Aorta (tissue), 5 donors: ENCODE measurements at regions of chr10 and their contacts with region 1.

Region 1: GRCh38 chr10:94076321-94076841 is 82.7 kb downstream of the PLCE1 start:
- DNase-seq: no peak
- ATAC-seq: peak; percentile 78
- H3K4me3 ChIP-seq: no peak overlapping the region
- H3K27ac ChIP-seq: no peak overlapping the region
- H3K4me1 ChIP-seq: no peaks in the 10 kb centered on the region
- H3K27me3 ChIP-seq: no peaks in the 10 kb centered on the region

Region 2: DNA sequence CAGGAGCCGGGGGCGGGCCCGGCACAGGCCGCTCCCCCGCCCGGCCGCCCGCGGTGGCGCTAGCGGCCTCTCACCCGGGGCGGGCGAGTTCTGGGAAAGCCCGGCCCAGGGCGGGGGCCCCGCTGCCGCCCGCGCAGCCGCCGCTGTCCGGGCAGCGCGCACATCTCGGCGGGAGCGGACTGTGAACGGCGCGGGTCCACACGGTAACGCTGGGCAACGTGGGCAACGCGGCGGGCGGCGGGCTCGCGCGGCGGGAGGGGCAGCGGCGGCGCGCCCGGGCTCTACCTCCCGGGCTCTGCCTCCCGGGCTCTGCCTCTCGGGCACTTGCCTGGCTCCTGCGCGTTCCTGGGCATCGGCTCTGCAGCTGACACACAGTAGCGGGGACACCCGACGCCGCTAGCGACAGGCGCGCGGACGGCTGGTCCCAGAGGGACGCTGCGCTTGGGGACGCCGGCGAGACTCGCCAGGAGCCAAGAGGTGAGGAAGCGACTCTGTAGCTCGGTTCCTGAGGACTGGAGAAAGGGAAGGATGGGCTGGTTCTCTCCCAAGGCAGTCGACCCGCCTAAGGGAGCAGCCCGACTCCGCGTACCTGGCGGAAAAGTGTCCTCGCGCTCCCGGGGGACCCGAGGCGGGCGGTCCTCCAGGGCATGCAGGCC is 82.5 kb before region 1 on chr10 and contains the start of gene PLCE1:
- intact Hi-C with region 1: loop called in 1 of 2 experiments (anchors 5 kb)
- DNase-seq: peak; percentile 73 to 88
- ATAC-seq: peak; percentile 81
- H3K4me3 ChIP-seq: peak within 1 kb of the TSS; percentile 28 to 59
- H3K27ac ChIP-seq: peak within 1 kb of the TSS in 1 of 2 donors; percentile 12
- H3K4me1 ChIP-seq: no peaks in the 10 kb centered on the region
- H3K27me3 ChIP-seq: no peaks in the 10 kb centered on the region
- total RNA-seq, gene PLCE1: 14.7 to 16.6 TPM

Region 3: GRCh38 chr10:94315024-94315451 is 238.7 kb after region 1 on chr10:
- intact Hi-C with region 1: loop called (anchors 2 to 5 kb)
- DNase-seq: no peak
- ATAC-seq: no peak
- H3K4me3 ChIP-seq: no peak overlapping the region
- H3K27ac ChIP-seq: peak overlapping the region in 1 of 2 donors; percentile 83
- H3K4me1 ChIP-seq: peaks cover 0 to 5% of the 10 kb centered on the region in 2 donors
- H3K27me3 ChIP-seq: no peaks in the 10 kb centered on the region

Region 4: DNA sequence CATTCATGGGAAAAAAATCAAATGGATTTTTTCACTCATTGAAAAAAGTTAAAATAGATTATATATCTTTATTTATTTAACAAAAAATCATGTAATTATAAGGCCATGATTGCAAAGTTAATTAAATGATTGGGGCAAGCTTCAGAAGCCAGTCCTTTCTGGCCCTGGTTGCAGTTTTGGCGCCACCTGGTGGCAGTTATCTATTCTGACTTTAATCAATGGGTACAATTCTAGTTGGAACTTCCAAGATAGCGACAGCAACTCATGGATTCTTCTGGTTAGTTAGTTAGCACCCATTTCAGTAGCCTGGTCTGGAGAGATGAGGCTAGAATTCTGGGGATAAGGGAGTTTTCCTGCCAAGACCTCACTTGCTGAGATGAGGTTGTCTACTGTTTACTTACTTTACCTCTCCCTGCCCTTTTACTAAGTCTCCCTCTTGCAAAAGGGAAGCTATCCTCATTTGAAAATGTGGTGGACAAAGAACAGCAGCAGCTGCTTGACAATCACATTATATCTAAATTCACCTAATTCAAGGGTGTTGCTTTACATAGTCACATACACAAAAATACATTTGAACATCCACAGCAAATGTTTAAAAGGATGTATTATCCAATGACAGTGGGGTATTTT is 244.0 kb after region 1 on chr10:
- intact Hi-C with region 1: loop called (anchors 2 to 5 kb)
- DNase-seq: peak; percentile 66 to 84
- ATAC-seq: no peak
- H3K4me3 ChIP-seq: no peak overlapping the region
- H3K27ac ChIP-seq: no peak overlapping the region
- H3K4me1 ChIP-seq: peaks cover 0 to 1% of the 10 kb centered on the region in 2 donors
- H3K27me3 ChIP-seq: no peaks in the 10 kb centered on the region